ENCODE measurements at regions of chr6 and their contacts with region 1.

Region 1: GRCh38 chr6:9250852-9251251 is 815.5 kb upstream of the SLC35B3 start:
- DNase-seq: peak; percentile 43 to 67
- H3K4me3 ChIP-seq: no peak overlapping the region
- H3K27ac ChIP-seq: no peak overlapping the region
- H3K4me1 ChIP-seq: no peaks in the 10 kb centered on the region
- H3K27me3 ChIP-seq: no peaks in the 10 kb centered on the region
- CTCF ChIP-seq: peak; percentile 61

Region 2: DNA sequence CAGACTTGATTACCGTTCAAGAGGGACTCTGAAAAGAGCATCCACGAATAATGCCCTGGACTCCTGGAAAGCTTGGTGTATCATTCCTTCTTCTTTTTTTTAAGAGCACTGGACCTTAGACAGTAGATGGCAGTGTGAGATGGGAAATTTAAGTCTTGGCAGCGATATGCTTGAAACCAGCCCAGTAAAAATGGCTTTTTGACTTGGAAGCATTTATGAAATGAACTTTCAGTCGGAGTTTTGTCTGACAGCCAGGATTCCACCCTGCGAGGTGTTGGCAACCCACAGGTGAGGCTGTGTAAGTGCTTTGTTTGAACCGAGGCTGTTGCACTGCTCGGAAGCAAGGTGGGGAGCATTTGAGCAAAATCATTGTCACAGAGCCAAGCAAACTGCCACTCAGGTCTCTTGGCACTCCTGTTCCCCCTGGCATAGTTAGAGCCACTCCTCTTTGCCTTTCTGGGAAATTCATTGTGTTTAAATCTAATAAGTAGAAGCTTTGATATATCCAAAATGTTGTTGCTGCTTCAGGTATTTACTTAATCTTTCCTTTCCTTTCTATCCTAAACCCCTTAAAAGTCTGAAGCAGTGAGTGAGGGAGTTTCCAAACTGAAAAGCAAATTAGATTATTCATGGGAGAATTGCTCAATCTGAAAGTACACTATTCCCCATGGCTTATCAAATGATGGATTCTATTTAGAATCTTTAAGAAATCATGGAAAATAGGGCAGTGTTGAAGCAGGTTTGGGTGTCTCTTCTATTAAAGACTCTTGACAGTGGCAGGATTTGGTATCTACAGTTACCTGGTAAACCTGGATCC is 542.7 kb before region 1 on chr6:
- CTCF ChIA-PET with region 1: no interaction called
- POLR2A ChIA-PET with region 1: no interaction called
- intact Hi-C with region 1: loop called (anchors 5 kb)
- DNase-seq: peak in 1 of 2 experiments; percentile 56
- H3K4me3 ChIP-seq: no peak overlapping the region
- H3K27ac ChIP-seq: no peak overlapping the region
- H3K4me1 ChIP-seq: no peaks in the 10 kb centered on the region
- H3K27me3 ChIP-seq: no peaks in the 10 kb centered on the region
- CTCF ChIP-seq: no peak; the same call in 1 of the 2 replicates

Region 3: GRCh38 chr6:9388596-9388995 is 137.7 kb after region 1 on chr6:
- CTCF ChIA-PET with region 1: no interaction called
- POLR2A ChIA-PET with region 1: no interaction called
- intact Hi-C with region 1: no loop called
- DNase-seq: no peak
- H3K4me3 ChIP-seq: no peak overlapping the region
- H3K27ac ChIP-seq: no peak overlapping the region
- H3K4me1 ChIP-seq: no peaks in the 10 kb centered on the region
- H3K27me3 ChIP-seq: no peaks in the 10 kb centered on the region
- CTCF ChIP-seq: no peak

Region 4: GRCh38 chr6:9405369-9405768 is 154.5 kb after region 1 on chr6:
- CTCF ChIA-PET with region 1: no interaction called
- POLR2A ChIA-PET with region 1: no interaction called
- intact Hi-C with region 1: loop called (anchors 2 kb)
- DNase-seq: peak; percentile 45 to 79
- H3K4me3 ChIP-seq: peak overlapping the region; percentile 31; the same call in 1 of the 2 replicates
- H3K27ac ChIP-seq: 0 out of 2 replicates have a peak overlapping the region, but pooled peaks have one; percentile 12
- H3K4me1 ChIP-seq: peaks cover 16% of the 10 kb centered on the region
- H3K27me3 ChIP-seq: no peaks in the 10 kb centered on the region
- CTCF ChIP-seq: no peak

Region 5: DNA sequence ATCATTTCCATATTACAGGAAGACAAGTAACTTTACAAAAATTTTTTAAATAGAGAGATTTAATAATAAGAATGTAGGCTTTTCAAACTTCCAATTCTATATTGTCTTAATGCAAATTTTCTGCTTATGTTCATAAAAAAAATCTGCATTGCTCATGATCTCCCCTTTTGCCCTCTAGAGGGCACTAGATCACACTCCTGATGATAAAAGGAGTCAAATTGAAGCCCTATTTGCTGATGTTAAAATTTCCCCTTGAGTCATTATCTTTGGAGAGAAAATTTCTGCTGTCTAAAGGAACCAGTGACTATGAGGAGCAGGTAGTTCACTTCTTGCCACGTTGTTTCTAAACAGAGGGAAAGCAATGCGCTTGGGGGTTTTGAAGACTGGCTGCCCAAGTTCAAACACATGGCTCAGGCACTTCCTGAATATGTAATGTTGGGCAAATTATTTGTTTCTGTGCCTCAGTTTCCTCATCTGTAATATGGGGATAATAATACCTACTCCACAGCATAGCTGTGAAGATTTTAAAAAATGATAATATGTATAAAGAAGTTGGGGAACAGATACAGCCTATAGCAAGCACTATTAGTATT is 289.8 kb after region 1 on chr6:
- CTCF ChIA-PET with region 1: no interaction called
- POLR2A ChIA-PET with region 1: interaction called, 3 read pairs
- intact Hi-C with region 1: loop called (anchors 2 kb)
- DNase-seq: peak; percentile 22 to 38
- H3K4me3 ChIP-seq: no peak overlapping the region
- H3K27ac ChIP-seq: no peak overlapping the region
- H3K4me1 ChIP-seq: no peaks in the 10 kb centered on the region
- H3K27me3 ChIP-seq: no peaks in the 10 kb centered on the region
- CTCF ChIP-seq: peak; percentile 73

Region 6: DNA sequence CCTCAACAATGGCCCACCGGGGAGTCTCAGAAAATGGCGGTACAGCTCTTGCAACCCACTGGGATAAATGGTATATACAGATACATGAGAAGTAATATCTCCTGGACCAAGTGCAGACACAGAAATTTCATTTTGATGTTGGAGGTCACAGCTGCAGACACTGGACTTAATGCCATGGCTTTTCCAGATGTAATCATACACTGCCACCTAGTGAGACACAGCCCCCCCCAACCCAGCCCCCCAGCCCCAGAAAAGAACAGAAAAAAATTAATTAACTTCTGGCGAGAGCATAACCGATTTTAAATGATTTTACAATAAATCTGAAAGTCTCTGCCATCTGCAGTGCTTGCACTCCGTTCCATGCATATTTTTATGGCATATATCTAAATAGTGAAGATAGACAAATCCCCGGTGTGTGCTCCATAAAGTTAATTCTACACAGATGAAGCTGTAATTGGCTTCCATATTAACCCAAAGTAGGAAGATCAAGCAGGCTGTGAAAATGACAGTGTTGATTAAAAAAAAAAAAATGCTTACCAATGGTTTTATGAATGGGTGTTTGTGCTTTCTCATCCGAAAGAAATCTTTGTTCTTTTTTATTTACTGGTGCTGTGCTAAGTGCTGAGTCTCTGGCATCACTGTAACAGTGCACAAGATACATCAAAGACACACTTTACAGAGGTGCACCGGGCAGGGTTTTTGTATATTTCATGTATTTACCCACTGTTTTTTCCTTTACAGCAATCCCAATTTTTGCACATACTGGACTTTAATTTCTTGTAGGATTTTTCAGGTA is 360.0 kb after region 1 on chr6:
- CTCF ChIA-PET with region 1: no interaction called
- POLR2A ChIA-PET with region 1: no interaction called
- intact Hi-C with region 1: loop called (anchors 10 kb)
- DNase-seq: no peak
- H3K4me3 ChIP-seq: no peak overlapping the region
- H3K27ac ChIP-seq: no peak overlapping the region
- H3K4me1 ChIP-seq: no peaks in the 10 kb centered on the region
- H3K27me3 ChIP-seq: no peaks in the 10 kb centered on the region
- CTCF ChIP-seq: no peak

Region 7: DNA sequence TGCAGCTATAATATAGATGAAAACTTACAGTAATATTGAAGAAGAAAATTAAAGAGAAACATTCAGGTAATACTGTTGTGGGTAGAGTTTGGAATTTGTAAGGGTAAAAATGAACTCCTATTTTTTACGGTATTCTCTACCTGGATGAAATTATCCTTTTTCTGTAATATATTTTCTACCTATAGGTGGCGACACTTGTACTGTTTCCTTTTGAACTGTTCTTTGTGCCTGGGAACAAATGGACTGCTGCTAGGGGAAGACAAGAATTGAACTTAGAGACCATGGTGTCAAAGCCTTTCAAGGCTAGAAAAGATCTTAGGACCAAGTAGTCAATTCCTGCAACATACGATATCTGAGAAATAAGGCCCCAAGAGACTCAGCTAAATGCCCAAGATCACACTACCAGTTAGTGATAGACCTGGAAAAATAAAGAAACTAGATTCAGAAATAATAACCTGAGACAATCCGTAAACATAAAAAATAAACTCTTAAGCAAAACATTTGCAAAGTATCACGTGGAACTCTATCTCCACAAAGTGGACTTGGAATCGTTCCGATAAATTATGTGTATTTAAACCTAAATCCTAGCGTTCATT is 780.2 kb after region 1 on chr6:
- CTCF ChIA-PET with region 1: no interaction called
- POLR2A ChIA-PET with region 1: no interaction called
- intact Hi-C with region 1: loop called (anchors 2 kb)
- DNase-seq: no peak
- H3K4me3 ChIP-seq: no peak overlapping the region
- H3K27ac ChIP-seq: no peak overlapping the region
- H3K4me1 ChIP-seq: peaks cover 28% of the 10 kb centered on the region
- H3K27me3 ChIP-seq: no peaks in the 10 kb centered on the region
- CTCF ChIP-seq: peak; percentile 58